ENCODE measurements at regions of chr3 and their contacts with region 1.

Region 1: DNA sequence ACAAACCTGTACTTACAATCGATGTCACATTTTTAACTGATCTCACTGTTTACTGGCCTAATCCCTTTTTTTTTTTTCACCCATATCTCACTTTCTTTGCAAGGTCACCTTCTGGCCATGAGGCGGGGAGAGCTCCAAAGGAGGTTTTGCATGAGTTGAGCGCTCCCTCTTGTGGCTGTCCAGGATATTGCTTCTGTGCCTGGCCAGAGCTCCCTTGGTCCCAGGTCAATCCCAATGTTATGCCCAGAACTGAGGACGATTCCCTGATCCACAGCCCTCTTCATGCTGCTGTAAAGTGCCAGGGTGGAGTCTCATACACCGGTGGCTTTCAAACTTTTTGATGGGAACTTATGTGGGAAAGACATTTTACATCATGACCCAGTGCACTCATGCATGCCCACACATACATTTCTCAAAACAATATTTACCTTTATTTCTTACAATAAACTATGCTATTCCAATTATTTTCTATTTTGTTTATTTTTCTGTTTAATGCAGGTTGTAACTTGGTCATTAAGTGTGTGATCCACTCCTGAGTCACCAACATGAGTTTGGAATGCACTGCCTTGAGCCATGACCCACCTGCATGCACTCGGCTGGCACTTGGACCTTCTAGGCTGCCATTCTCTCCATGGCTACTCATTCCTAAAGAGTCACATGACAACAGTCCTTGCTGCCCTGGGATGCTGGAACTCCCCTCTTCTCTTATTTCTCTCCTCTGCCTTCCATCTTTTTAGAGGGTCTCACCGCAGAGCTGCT is 9.6 kb upstream of the SST start:
- DNase-seq: peak; percentile 80
- H3K4me3 Mint-ChIP-seq: no peak overlapping the region
- H3K27ac Mint-ChIP-seq: no peak overlapping the region
- H3K4me1 Mint-ChIP-seq: peaks cover 6% of the 10 kb centered on the region
- H3K27me3 Mint-ChIP-seq: peaks cover 28% of the 10 kb centered on the region

Region 2: GRCh38 chr3:187616307-187616972 is 63.4 kb before region 1 on chr3:
- CTCF ChIA-PET with region 1: interaction called, 86 read pairs
- intact Hi-C with region 1: loop called (anchors 1 kb)
- DNase-seq: peak; percentile 79
- H3K4me3 Mint-ChIP-seq: no peak overlapping the region
- H3K27ac Mint-ChIP-seq: no peak overlapping the region
- H3K4me1 Mint-ChIP-seq: no peaks in the 10 kb centered on the region
- H3K27me3 Mint-ChIP-seq: peaks cover 4% of the 10 kb centered on the region

Region 3: GRCh38 chr3:187623285-187623814 is 56.5 kb before region 1 on chr3:
- CTCF ChIA-PET with region 1: interaction called, 36 read pairs
- intact Hi-C with region 1: no loop called
- DNase-seq: no peak
- H3K4me3 Mint-ChIP-seq: no peak overlapping the region
- H3K27ac Mint-ChIP-seq: no peak overlapping the region
- H3K4me1 Mint-ChIP-seq: no peaks in the 10 kb centered on the region
- H3K27me3 Mint-ChIP-seq: peaks cover 5% of the 10 kb centered on the region

Region 4: GRCh38 chr3:187662848-187663409 is 16.9 kb before region 1 on chr3:
- CTCF ChIA-PET with region 1: interaction called, 17 read pairs
- intact Hi-C with region 1: no loop called
- DNase-seq: no peak
- H3K4me3 Mint-ChIP-seq: no peak overlapping the region
- H3K27ac Mint-ChIP-seq: no peak overlapping the region
- H3K4me1 Mint-ChIP-seq: peaks cover 9% of the 10 kb centered on the region
- H3K27me3 Mint-ChIP-seq: peaks cover 36% of the 10 kb centered on the region

Region 5: DNA sequence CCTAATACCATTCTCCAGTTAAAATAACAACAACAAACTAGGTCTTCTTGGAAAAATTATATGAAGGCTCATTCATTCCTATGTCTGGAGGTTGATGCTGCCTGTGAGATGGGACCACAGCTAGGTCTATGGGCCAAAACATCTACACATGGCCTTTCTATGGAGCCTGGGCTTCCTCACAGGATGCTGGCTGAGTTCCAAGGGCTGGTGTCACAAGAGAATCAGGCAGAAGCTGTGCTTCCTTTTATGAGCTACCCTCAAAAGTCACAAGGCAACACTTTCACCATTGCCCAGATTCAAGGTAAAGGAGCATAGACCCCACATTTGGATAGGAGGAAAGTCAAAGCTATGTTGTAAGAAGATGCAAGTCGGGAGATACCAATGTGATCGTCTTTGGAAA is 27.2 kb after region 1 on chr3:
- CTCF ChIA-PET with region 1: interaction called, 12 read pairs
- intact Hi-C with region 1: no loop called
- DNase-seq: no peak
- H3K4me3 Mint-ChIP-seq: no peak overlapping the region
- H3K27ac Mint-ChIP-seq: no peak overlapping the region
- H3K4me1 Mint-ChIP-seq: no peaks in the 10 kb centered on the region
- H3K27me3 Mint-ChIP-seq: no peaks in the 10 kb centered on the region

Region 6: DNA sequence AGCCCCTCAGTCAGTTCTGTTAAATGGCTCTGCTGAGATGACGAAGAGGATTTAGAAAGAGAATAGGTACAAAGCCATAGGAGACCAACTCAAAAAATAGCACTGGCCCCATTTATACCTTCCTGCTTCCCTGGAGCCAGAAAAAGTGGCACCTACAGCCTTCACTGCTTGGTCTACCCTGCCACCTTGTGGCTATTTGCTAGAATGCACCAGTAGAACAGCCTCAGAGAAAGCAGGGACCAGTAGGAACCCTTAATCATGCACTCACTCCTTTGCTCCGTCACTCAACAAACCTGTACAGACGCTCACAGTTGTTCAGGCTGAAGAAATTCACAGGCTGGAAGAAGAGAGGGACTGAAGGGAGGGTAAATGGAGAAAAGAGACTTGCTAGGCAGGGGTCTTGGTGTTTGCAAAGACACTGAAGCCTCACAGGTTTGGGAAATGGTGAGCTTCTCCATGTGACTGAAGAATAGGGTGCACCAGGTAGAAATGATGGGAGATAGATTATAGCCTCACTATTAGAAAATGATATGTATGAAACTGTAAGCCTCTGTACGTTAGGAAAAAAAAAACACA is 34.7 kb after region 1 on chr3:
- CTCF ChIA-PET with region 1: interaction called, 62 read pairs
- intact Hi-C with region 1: loop called (anchors 1 kb)
- DNase-seq: peak; percentile 88
- H3K4me3 Mint-ChIP-seq: no peak overlapping the region
- H3K27ac Mint-ChIP-seq: no peak overlapping the region
- H3K4me1 Mint-ChIP-seq: peaks cover 9% of the 10 kb centered on the region
- H3K27me3 Mint-ChIP-seq: no peaks in the 10 kb centered on the region